Esophagus muscularis mucosa (tissue), 4 donors: ENCODE measurements at regions of chr16 and their contacts with region 1.

Region 1: DNA sequence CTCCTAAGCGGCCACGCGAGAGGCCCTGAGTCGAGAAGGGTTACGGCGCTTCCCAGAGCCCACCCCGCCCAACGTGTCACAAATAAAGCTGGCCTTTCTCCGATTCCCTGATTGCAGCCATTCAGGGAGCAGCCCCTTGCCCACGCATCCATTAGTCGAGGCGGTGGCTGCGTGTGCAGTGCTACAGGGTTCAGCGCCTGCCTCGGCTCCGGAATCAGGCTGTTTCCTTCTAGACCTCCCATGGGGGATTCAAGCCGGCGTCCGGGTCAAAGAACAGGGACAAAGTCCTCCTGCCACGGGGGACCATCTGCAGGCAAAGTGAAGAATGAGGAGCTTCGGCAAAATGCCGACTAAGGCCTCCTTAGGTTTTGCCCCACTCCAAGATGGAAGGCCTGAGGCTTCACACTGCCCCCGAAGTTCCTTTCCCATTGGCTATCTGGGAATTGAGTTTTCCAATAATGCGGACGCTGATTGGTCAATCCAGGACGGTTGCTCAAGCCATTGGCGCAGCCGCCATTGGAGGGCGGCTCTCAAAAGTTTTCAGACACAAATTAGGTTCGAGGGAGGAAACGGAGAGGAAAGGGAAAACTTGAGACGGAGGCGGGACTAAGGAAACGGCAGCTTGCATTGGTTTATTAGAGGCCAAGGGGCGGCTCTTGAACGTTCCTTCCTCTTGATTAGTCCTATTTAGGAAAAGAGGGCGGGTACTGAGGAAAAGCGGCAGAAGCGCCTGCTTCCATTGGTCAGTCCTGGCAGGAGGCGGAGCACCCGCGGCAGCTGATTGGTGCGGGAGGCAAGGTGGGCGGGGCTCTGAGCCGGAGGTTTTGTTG is 430 bp upstream of the KATNB1 start:
- DNase-seq: peak; percentile 100
- H3K4me3 ChIP-seq: peak overlapping the region; percentile 78 to 98 (median 88)
- H3K27ac ChIP-seq: peak overlapping the region; percentile 85 to 90 (median 88)
- H3K4me1 ChIP-seq: peaks cover 18 to 40% (median 27%) of the 10 kb centered on the region in 4 donors
- H3K27me3 ChIP-seq: no peaks in the 10 kb centered on the region
- CTCF ChIP-seq: peak in 1 of 3 experiments; percentile 36
- EP300 ChIP-seq: no peak
- POLR2A ChIP-seq: no peak

Region 2: DNA sequence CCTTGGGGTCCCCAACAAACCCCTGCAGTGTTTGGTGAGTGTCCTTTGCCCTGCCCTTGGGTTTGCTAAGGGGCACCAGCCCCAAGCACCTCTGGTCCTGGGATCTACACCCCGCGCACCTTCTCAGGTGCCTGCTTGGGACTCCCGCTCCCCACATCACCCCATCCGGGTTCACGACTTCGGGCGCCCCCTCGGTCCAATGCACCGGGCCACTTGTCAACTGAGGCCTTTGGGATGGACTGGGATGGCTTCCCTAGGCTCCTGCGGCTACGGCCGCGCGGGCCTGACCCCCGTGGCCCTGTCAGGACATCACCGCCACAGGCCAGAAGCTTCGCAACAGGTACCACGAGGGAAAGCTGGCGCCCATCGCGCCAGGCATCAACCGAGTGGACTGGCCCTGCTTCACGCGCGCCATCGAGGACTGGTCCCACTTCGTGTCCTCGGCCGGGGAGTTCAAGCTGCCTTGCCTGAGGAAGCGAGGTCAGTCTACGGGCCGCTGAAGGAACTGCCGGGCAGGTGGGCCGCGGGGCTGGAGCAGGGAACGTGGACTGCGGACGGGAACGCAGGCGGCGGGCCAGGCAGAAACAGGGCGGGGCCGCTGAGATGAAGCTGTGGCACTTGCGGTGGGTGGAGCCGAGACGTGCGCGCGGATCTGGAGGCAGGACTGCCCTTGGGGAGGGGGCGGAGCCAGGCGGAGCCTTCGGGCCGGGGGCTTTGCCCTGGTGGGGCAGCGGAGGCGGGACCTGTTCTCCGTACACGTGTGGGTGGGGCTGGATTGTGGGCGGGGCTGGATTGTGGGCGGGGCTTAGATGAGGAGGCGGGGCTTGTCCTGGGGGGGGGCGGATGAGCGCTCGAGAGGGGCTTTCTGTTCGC is 249.4 kb after region 1 on chr16:
- intact Hi-C with region 1: loop called (anchors 10 kb)
- DNase-seq: peak; percentile 93
- H3K4me3 ChIP-seq: peak overlapping the region; percentile 59 to 70 (median 65)
- H3K27ac ChIP-seq: peak overlapping the region; percentile 49 to 70 (median 64)
- H3K4me1 ChIP-seq: peaks cover 14 to 22% (median 21%) of the 10 kb centered on the region in 4 donors
- H3K27me3 ChIP-seq: no peaks in the 10 kb centered on the region
- CTCF ChIP-seq: no peak
- EP300 ChIP-seq: no peak
- POLR2A ChIP-seq: no peak